PC-3 (cell line): ENCODE measurements at regions of chr7 and their contacts with region 1.

Region 1: GRCh38 chr7:112414855-112415490 is 35.3 kb upstream of the IFRD1 start:
- DNase-seq: peak; percentile 70
- ATAC-seq: peak; percentile 83
- H3K4me3 ChIP-seq: no peak overlapping the region
- H3K27ac ChIP-seq: no peak overlapping the region
- H3K4me1 ChIP-seq: peaks cover 11% of the 10 kb centered on the region; the same call in 1 of the 2 replicates
- H3K27me3 ChIP-seq: no peaks in the 10 kb centered on the region
- CTCF ChIP-seq: peak; percentile 78

Region 2: GRCh38 chr7:111741811-111742240 is 673.1 kb before region 1 on chr7:
- CTCF ChIA-PET with region 1: interaction called, 3 read pairs
- POLR2A ChIA-PET with region 1: no interaction called
- intact Hi-C with region 1: loop called (anchors 1 kb)
- DNase-seq: peak; percentile 78
- ATAC-seq: peak; percentile 86
- H3K4me3 ChIP-seq: no peak overlapping the region
- H3K27ac ChIP-seq: no peak overlapping the region
- H3K4me1 ChIP-seq: peaks cover under 1% of the 10 kb centered on the region; the same call in 1 of the 2 replicates
- H3K27me3 ChIP-seq: no peaks in the 10 kb centered on the region
- CTCF ChIP-seq: peak; percentile 81

Region 3: GRCh38 chr7:111855161-111855856 is 559.7 kb before region 1 on chr7:
- CTCF ChIA-PET with region 1: no interaction called
- POLR2A ChIA-PET with region 1: no interaction called
- intact Hi-C with region 1: loop called (anchors 5 kb)
- DNase-seq: peak; percentile 62
- ATAC-seq: peak; percentile 79
- H3K4me3 ChIP-seq: no peak overlapping the region
- H3K27ac ChIP-seq: no peak overlapping the region
- H3K4me1 ChIP-seq: no peaks in the 10 kb centered on the region
- H3K27me3 ChIP-seq: no peaks in the 10 kb centered on the region
- CTCF ChIP-seq: peak; percentile 71

Region 4: DNA sequence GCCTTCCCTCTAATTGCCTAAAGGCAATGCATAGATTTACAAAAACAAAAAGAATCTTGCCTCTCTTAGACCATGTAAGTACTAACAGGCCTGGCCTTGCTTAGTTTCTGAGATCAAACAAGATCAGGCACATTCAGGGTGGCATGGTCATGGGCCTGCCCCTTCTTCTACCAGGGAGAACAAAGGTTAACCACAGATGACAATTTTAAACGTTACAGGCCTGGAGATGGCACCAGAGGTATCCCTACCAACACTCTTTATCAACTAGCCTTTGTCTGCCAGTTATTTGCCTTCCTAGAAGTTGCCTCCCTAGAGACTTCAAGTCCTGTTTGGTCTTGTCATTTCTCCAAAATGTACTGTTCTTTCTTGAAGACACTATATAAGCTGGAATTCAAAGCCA is 461.4 kb before region 1 on chr7:
- CTCF ChIA-PET with region 1: no interaction called
- POLR2A ChIA-PET with region 1: no interaction called
- intact Hi-C with region 1: loop called (anchors 1 kb)
- DNase-seq: peak; percentile 48
- ATAC-seq: peak; percentile 77
- H3K4me3 ChIP-seq: no peak overlapping the region
- H3K27ac ChIP-seq: no peak overlapping the region
- H3K4me1 ChIP-seq: peaks cover 20% of the 10 kb centered on the region
- H3K27me3 ChIP-seq: no peaks in the 10 kb centered on the region
- CTCF ChIP-seq: peak; percentile 25; the same call in 1 of the 2 replicates

Region 5: GRCh38 chr7:112495810-112496462 is 81.0 kb after region 1 on chr7:
- CTCF ChIA-PET with region 1: interaction called, 4 read pairs
- POLR2A ChIA-PET with region 1: no interaction called
- intact Hi-C with region 1: loop called (anchors 1 kb)
- DNase-seq: peak; percentile 69
- ATAC-seq: peak; percentile 97
- H3K4me3 ChIP-seq: no peak overlapping the region
- H3K27ac ChIP-seq: no peak overlapping the region
- H3K4me1 ChIP-seq: no peaks in the 10 kb centered on the region
- H3K27me3 ChIP-seq: no peaks in the 10 kb centered on the region
- CTCF ChIP-seq: peak; percentile 89